ENCODE measurements at regions of chr22 and their contacts with region 1.

Region 1: DNA sequence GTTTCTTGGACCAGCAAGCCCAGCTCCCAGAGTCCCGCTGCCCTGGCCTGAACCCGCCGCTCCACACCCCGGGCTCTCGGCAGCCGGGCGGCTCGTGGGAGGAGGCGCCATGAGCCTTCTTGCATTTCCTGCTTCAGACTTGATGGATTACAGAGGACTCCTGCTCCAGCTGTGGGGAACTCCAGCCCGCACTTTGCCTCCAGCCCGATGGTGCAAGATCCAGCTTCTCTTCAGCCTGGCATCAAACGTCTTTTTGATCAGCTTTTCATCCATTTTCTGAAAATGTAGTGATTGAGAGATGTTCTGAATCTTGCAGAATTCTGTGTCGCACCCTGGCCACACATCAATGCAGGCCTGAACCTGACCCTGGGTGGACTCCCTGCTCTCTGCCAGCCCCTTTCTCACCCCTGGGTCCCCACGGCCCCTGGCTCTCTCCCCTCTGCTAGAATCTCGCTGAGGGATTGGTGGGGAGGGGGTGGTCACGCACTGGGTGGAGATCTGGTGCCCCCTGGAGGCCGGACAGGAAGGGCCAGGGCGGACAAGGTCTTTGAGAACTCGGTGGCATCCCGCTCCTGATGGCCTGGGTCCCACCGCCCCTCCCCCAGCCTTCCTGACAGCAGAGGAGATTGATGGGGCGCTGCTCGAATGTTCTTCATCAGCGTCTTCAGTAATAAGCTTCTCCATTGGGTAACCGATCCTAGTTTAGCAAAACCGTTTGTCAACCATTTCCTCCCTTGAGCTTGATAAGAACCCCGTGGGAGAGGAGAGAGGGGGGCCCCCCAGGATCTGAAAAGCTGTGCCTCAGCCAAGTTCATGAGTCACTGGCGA is 12.1 kb upstream of the NFAM1 start:
- DNase-seq: peak; percentile 67 to 74
- ATAC-seq: peak; percentile 84 to 90
- H3K4me3 ChIP-seq: peak overlapping the region; percentile 30
- H3K27ac ChIP-seq: peak overlapping the region; percentile 68 to 74
- H3K4me1 ChIP-seq: peaks cover 5% of the 10 kb centered on the region; the same call in 1 of the 3 replicates
- CTCF ChIP-seq: peak; percentile 63
- EP300 ChIP-seq: no peak
- POLR2A ChIP-seq: no peak
- RAD21 ChIP-seq: peak; percentile 73

Region 2: GRCh38 chr22:42116848-42117424 is 327.4 kb before region 1 on chr22:
- CTCF ChIA-PET with region 1: interaction called, 12 read pairs
- POLR2A ChIA-PET with region 1: no interaction called
- DNase-seq: no peak
- ATAC-seq: no peak
- H3K4me3 ChIP-seq: no peak overlapping the region
- H3K27ac ChIP-seq: no peak overlapping the region
- H3K4me1 ChIP-seq: no peaks in the 10 kb centered on the region
- CTCF ChIP-seq: no peak
- EP300 ChIP-seq: no peak
- POLR2A ChIP-seq: no peak
- RAD21 ChIP-seq: peak in 1 of 2 experiments; percentile 3; a peak in 1 of 5 replicates

Region 3: DNA sequence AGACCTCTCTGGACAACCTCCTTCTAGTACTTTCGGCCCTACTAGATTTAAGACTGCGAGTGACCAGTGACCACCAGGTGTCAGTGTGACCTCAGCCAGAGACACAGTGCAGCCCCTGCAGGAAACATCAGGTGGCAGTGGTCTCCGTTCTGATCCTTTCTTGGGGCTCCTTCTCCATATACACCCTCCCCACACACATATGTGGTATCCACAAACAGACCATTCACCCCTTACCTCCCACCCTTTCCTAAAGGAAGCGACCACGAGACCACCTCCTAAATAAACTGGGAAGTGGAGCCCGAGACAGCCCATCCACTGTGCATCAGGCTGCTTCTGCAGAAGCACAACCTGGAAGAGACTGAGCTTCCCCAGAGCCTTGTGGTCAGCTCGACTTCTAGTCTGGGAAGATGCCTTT is 275.2 kb before region 1 on chr22:
- CTCF ChIA-PET with region 1: interaction called, 29 read pairs
- POLR2A ChIA-PET with region 1: no interaction called
- DNase-seq: peak; percentile 71 to 78
- ATAC-seq: peak; percentile 84 to 95
- H3K4me3 ChIP-seq: no peak overlapping the region
- H3K27ac ChIP-seq: no peak overlapping the region
- H3K4me1 ChIP-seq: peaks cover 22% of the 10 kb centered on the region
- CTCF ChIP-seq: peak; percentile 93
- EP300 ChIP-seq: no peak
- POLR2A ChIP-seq: no peak
- RAD21 ChIP-seq: peak; percentile 92 to 93

Region 4: GRCh38 chr22:42396621-42397331 is 47.5 kb before region 1 on chr22:
- CTCF ChIA-PET with region 1: no interaction called
- POLR2A ChIA-PET with region 1: no interaction called
- DNase-seq: no peak
- ATAC-seq: 0 out of 6 replicates have a peak, but pooled peaks of 1 of the 2 experiments have one; percentile 49
- H3K4me3 ChIP-seq: no peak overlapping the region
- H3K27ac ChIP-seq: no peak overlapping the region
- H3K4me1 ChIP-seq: no peaks in the 10 kb centered on the region
- CTCF ChIP-seq: no peak
- EP300 ChIP-seq: no peak
- POLR2A ChIP-seq: no peak
- RAD21 ChIP-seq: no peak

Region 5: GRCh38 chr22:42462016-42462415 is 17.7 kb after region 1 on chr22:
- CTCF ChIA-PET with region 1: interaction called, 16 read pairs
- POLR2A ChIA-PET with region 1: no interaction called
- DNase-seq: no peak
- ATAC-seq: no peak
- H3K4me3 ChIP-seq: no peak overlapping the region
- H3K27ac ChIP-seq: no peak overlapping the region
- H3K4me1 ChIP-seq: no peaks in the 10 kb centered on the region
- CTCF ChIP-seq: no peak
- EP300 ChIP-seq: no peak
- POLR2A ChIP-seq: no peak
- RAD21 ChIP-seq: no peak

Region 6: DNA sequence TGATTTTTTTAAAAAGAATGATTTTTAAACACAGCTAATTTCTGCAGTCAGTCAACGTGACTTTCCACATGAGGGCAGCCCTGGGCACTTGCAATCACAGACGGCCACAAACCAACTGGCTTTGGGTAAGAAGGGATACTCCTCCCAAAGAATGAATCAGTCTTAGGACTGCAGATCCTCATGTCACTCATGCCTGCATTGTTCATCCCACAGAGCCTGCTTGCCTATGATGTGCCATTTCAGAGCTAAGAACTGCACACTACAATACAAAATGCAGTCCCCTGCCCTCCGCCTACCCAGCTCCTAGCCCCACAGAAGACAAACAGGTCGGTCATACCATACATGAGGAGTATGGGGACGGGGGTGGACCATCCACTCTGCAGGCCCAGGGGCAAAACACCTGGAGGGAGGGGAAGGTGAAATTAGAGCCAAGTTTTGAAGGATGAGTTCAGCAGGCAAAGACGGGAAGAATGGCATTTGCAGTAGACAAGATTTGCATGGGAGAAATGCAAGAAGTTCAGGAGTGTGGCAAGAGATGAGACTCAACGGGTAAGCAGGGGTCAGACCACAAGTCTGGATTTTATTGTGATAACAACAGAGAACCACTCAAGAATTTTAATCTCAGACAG is 546.0 kb after region 1 on chr22:
- CTCF ChIA-PET with region 1: no interaction called
- POLR2A ChIA-PET with region 1: no interaction called
- DNase-seq: peak; percentile 73 to 86
- ATAC-seq: peak; percentile 71 to 77
- H3K4me3 ChIP-seq: peak overlapping the region; percentile 14; the same call in 1 of the 3 replicates
- H3K27ac ChIP-seq: peak overlapping the region; percentile 95 to 99
- H3K4me1 ChIP-seq: peaks cover 67% of the 10 kb centered on the region
- CTCF ChIP-seq: peak; percentile 62
- EP300 ChIP-seq: no peak
- POLR2A ChIP-seq: no peak
- RAD21 ChIP-seq: peak; percentile 65 to 69; a peak in 4 of 5 replicates

Measured in A549 (cell line).